Caco-2 (cell line): ENCODE measurements at regions of chr19 and their contacts with region 1.

Region 1: GRCh38 chr19:40425450-40426287 is at the start of gene SERTAD1:
- DNase-seq: peak; percentile 100
- H3K4me3 ChIP-seq: peak within 1 kb of the TSS; percentile 46
- H3K4me3 Mint-ChIP-seq: peak within 1 kb of the TSS; percentile 93
- H3K27ac Mint-ChIP-seq: peak within 1 kb of the TSS; percentile 90
- H3K4me1 ChIP-seq: no peaks in the 10 kb centered on the region
- H3K4me1 Mint-ChIP-seq: peaks cover 8% of the 10 kb centered on the region
- H3K27me3 ChIP-seq: no peaks in the 10 kb centered on the region
- H3K27me3 Mint-ChIP-seq: no peaks in the 10 kb centered on the region
- CTCF ChIP-seq: peak; percentile 91 to 95
- total RNA-seq, gene SERTAD1: 7.7 and 8.6 TPM in 2 replicates

Region 2: GRCh38 chr19:40348125-40348913 is 77.3 kb before region 1 on chr19 and contains the starts of genes C19orf47 and PLD3:
- CTCF ChIA-PET with region 1: interaction called, 6 read pairs
- POLR2A ChIA-PET with region 1: interaction called, 14 read pairs
- intact Hi-C with region 1: loop called (anchors 2 kb)
- DNase-seq: peak; percentile 100
- H3K4me3 ChIP-seq: peak within 1 kb of the TSS; percentile 79
- H3K4me3 Mint-ChIP-seq: peak within 1 kb of the TSS; percentile 92
- H3K27ac Mint-ChIP-seq: peak within 1 kb of the TSS; percentile 85
- H3K4me1 ChIP-seq: 0 out of 2 replicates have a peak, but pooled peaks cover 5% of the 10 kb centered on the region
- H3K4me1 Mint-ChIP-seq: no peaks in the 10 kb centered on the region
- H3K27me3 ChIP-seq: no peaks in the 10 kb centered on the region
- H3K27me3 Mint-ChIP-seq: no peaks in the 10 kb centered on the region
- CTCF ChIP-seq: no peak
- total RNA-seq, gene C19orf47: 25.8 and 28.3 TPM in 2 replicates
- total RNA-seq, gene PLD3: 100 and 114 TPM in 2 replicates

Region 3: GRCh38 chr19:40381321-40381720 is 44.3 kb before region 1 on chr19:
- CTCF ChIA-PET with region 1: no interaction called
- POLR2A ChIA-PET with region 1: no interaction called
- intact Hi-C with region 1: no loop called
- DNase-seq: peak in 1 of 2 experiments; percentile 29
- H3K4me3 ChIP-seq: no peak overlapping the region
- H3K4me3 Mint-ChIP-seq: no peak overlapping the region
- H3K27ac Mint-ChIP-seq: no peak overlapping the region
- H3K4me1 ChIP-seq: no peaks in the 10 kb centered on the region
- H3K4me1 Mint-ChIP-seq: peaks cover 6% of the 10 kb centered on the region
- H3K27me3 ChIP-seq: no peaks in the 10 kb centered on the region
- H3K27me3 Mint-ChIP-seq: no peaks in the 10 kb centered on the region
- CTCF ChIP-seq: peak in 1 of 2 experiments; percentile 32

Region 4: GRCh38 chr19:40403262-40403984 is 22.2 kb before region 1 on chr19:
- CTCF ChIA-PET with region 1: interaction called, 19 read pairs
- POLR2A ChIA-PET with region 1: interaction called, 16 read pairs
- intact Hi-C with region 1: loop called (anchors 2 kb)
- DNase-seq: peak; percentile 98
- H3K4me3 ChIP-seq: peak overlapping the region; percentile 78
- H3K4me3 Mint-ChIP-seq: peak overlapping the region; percentile 79
- H3K27ac Mint-ChIP-seq: peak overlapping the region; percentile 42
- H3K4me1 ChIP-seq: peaks cover 2% of the 10 kb centered on the region; the same call in 1 of the 2 replicates
- H3K4me1 Mint-ChIP-seq: peaks cover 23% of the 10 kb centered on the region
- H3K27me3 ChIP-seq: no peaks in the 10 kb centered on the region
- H3K27me3 Mint-ChIP-seq: no peaks in the 10 kb centered on the region
- CTCF ChIP-seq: no peak

Region 5: GRCh38 chr19:40444192-40445028 is 18.7 kb after region 1 on chr19 and contains the start of gene SERTAD3:
- CTCF ChIA-PET with region 1: interaction called, 17 read pairs
- POLR2A ChIA-PET with region 1: interaction called, 45 read pairs
- intact Hi-C with region 1: loop called (anchors 1 kb)
- DNase-seq: peak; percentile 97 to 99
- H3K4me3 ChIP-seq: peak within 1 kb of the TSS; percentile 90
- H3K4me3 Mint-ChIP-seq: peak within 1 kb of the TSS; percentile 97
- H3K27ac Mint-ChIP-seq: peak within 1 kb of the TSS; percentile 98
- H3K4me1 ChIP-seq: peaks cover 23% of the 10 kb centered on the region
- H3K4me1 Mint-ChIP-seq: peaks cover 9% of the 10 kb centered on the region
- H3K27me3 ChIP-seq: no peaks in the 10 kb centered on the region
- H3K27me3 Mint-ChIP-seq: no peaks in the 10 kb centered on the region
- CTCF ChIP-seq: peak in 1 of 2 experiments; percentile 61
- total RNA-seq, gene SERTAD3: 45.2 and 52.2 TPM in 2 replicates

Region 6: GRCh38 chr19:40452016-40452415 is 26.3 kb after region 1 on chr19:
- CTCF ChIA-PET with region 1: interaction called, 11 read pairs
- POLR2A ChIA-PET with region 1: interaction called, 11 read pairs
- intact Hi-C with region 1: no loop called
- DNase-seq: no peak
- H3K4me3 ChIP-seq: no peak overlapping the region
- H3K4me3 Mint-ChIP-seq: no peak overlapping the region
- H3K27ac Mint-ChIP-seq: peak overlapping the region; percentile 84
- H3K4me1 ChIP-seq: peaks cover 18% of the 10 kb centered on the region
- H3K4me1 Mint-ChIP-seq: peaks cover 17% of the 10 kb centered on the region
- H3K27me3 ChIP-seq: no peaks in the 10 kb centered on the region
- H3K27me3 Mint-ChIP-seq: no peaks in the 10 kb centered on the region
- CTCF ChIP-seq: no peak

Region 7: GRCh38 chr19:40721936-40722661 is 296.4 kb after region 1 on chr19:
- CTCF ChIA-PET with region 1: no interaction called
- POLR2A ChIA-PET with region 1: interaction called, 13 read pairs
- intact Hi-C with region 1: no loop called
- DNase-seq: no peak
- H3K4me3 ChIP-seq: no peak overlapping the region
- H3K4me3 Mint-ChIP-seq: no peak overlapping the region
- H3K27ac Mint-ChIP-seq: peak overlapping the region; percentile 6
- H3K4me1 ChIP-seq: peaks cover 6% of the 10 kb centered on the region; the same call in 1 of the 2 replicates
- H3K4me1 Mint-ChIP-seq: peaks cover 10% of the 10 kb centered on the region
- H3K27me3 ChIP-seq: no peaks in the 10 kb centered on the region
- H3K27me3 Mint-ChIP-seq: no peaks in the 10 kb centered on the region
- CTCF ChIP-seq: no peak